Motor neuron (in vitro differentiated cells): ENCODE measurements at regions of chr12 and their contacts with region 1.

Region 1: DNA sequence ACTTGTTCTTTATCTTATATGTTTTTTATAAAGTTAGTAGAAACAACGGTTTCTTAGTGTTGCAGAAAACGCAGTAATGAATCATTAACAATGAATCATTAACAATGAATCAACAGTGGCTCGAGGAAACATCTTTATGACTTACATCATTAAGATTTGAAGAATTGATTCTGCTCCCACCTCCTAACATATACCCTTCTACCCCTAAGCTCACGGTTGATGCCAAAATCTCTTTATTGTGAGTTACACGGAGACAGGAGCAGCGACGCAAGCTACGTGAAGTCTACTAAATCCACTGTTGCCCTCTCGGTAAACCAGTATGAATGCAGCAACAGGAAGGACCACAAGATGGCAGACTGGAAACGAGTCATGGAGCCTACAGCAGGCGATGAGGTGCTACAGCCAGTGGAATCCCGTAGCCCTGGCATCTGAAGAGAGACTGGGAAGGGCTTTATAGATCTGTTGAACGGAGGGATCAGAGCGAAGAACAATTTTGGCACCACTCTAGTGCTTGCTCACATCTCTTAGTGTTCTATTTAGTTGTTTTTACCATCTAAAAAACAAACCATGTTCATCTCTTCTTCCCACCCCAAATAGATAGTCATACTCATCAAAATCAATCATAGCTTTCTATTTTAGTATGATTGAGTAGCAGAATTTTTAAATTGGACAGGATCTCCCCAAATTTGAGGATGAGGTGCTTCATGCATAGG is 332.7 kb downstream of the DUSP6 start:
- ATAC-seq: peak; percentile 92 to 100 (median 98)
- H3K4me3 ChIP-seq: peak overlapping the region; percentile 4 to 21 (median 13)
- H3K27ac ChIP-seq: no peak overlapping the region
- H3K4me1 ChIP-seq: no peaks in the 10 kb centered on the region

Region 2: GRCh38 chr12:88111074-88111652 is 908.4 kb before region 1 on chr12:
- in situ Hi-C with region 1: loop called in 1 of 9 experiments (anchors 25 kb)
- ATAC-seq: no peak
- H3K4me3 ChIP-seq: no peak overlapping the region
- H3K27ac ChIP-seq: no peak overlapping the region
- H3K4me1 ChIP-seq: no peaks in the 10 kb centered on the region

Region 3: DNA sequence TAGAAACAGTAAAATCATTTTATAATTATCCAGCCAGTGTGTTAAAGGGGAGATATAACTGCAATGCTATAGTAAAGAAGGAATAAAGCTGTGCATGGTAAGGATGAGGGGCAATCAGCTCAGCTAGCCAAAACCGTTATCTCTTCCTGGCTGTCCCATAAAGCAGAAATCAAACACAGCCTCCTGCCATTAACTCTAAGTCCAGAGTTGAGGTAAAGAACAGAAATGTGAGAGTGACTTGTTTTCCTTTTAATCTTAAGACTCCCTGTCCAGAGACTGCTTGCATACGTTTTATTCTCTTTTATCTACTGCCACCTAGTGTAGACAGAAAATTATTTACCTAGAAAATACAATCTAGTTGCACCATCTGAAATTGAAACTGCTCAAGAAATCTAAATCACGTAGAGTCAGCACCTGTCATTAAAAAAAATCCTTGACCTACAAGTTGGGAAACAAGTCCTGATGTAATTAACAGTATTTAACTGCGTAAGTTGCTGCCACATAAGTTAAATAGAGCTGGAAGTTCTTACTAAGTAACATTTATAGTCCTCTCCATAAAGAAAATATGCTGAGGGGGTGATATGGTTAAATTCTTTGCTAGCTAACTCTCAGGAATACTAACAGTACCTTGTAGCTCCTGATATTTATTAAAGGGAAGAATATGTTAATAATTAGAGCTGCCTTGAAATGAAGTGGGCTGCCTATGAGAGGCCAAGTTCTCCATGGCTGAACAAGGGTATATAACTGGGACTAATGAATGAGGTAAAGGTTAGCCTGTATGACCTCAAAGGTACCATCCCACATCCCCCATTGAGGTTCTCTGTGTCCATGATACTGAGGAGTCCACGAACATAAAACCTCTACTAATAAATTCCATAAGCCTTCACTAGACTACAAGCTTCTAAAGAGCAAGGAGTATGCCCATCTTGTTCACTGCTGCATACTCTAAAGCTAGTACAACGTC is 442.4 kb after region 1 on chr12:
- in situ Hi-C with region 1: loop called in 4 of 9 experiments (anchors 5 to 25 kb)
- ATAC-seq: peak; percentile 61 to 94 (median 84)
- H3K4me3 ChIP-seq: no peak overlapping the region
- H3K27ac ChIP-seq: no peak overlapping the region
- H3K4me1 ChIP-seq: peaks cover 0 to 7% of the 10 kb centered on the region in 2 donors